CD4-positive, alpha-beta memory T cell (primary cell): ENCODE measurements at regions of chr2 and their contacts with region 1.

Region 1: DNA sequence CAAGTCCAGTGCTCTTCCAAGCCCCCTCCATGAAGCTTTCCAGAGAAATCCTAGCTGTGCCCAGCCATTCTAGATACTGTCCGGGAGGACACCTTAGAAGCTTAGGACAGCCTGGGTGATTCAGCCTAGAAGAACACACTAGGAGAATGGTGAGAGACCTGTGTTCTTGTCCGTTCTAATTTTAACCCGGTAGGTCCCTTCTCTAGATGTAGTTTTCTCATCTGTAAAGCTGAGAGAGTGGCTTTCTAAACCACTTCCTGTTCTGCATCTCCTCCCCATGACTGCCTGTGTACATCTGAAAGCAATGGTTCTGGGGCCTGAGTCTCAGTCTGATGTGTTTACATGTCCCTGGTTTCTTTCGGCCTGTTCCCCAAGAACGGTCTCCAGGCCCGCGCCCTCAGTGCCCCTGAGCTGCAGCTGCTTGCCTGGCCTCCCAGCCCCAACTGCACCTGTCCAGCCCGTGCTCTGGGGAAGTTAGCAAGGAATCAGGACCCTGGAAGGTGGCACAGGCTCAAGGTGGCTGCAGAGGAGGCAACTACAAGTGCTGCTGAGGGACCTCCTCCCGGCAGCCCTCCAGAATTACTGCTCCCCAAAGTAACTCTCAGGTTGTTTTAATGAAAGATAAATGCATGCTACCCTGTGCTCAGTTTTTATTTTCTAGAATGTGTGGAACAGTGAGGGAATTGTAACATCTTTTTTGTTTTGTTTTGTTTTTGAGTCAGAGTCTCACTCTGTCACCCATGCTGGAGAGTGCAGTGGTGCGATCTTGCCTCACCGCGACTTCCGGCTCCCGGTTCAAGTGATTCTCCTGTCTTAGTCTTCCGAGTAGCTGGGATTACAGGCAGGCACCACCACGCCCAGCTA is 105.9 kb downstream of the LBH start:
- DNase-seq: peak; percentile 58 to 66 (median 64)
- H3K4me3 ChIP-seq: peak overlapping the region; percentile 10 to 61
- H3K4me3 Mint-ChIP-seq: peak overlapping the region; percentile 76 to 89 (median 82)
- H3K27ac ChIP-seq: peak overlapping the region; percentile 58
- H3K27ac Mint-ChIP-seq: peak overlapping the region; percentile 94 to 97 (median 96)
- H3K4me1 ChIP-seq: peaks cover 72% of the 10 kb centered on the region
- H3K4me1 Mint-ChIP-seq: peaks cover 63 to 74% (median 70%) of the 10 kb centered on the region in 4 donors
- H3K27me3 ChIP-seq: no peaks in the 10 kb centered on the region
- H3K27me3 Mint-ChIP-seq: no peaks in the 10 kb centered on the region

Region 2: DNA sequence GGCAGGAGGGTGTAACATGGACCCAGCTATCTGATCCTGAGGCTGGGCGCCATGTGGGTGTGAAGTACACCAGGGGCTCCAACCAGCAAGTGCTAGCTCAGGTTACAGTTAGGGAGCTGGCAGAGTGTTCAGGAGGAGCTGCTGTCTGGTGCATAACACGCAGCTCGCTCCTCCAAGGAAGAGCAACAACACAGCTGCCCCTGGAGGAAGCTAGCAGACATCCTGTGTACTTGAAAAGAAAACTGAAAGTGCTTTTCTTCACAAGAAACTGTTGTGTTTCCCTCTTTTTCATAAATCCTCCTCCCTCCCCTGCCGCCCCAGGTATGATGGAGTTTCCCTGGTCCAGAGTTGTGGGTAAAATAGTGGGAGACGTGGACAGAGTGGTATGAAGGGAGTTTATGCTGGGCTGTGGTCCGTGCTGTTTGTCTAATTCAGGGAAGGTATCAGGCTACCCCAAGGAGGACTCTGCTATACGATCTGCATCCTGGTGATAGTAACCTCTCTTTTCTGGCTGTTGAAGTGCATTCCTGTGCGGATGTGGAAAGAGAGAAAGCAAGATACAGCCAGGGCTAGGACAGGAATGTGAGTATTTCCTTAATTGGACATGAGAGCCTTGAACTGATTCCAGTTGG is 112.0 kb before region 1 on chr2:
- CTCF ChIA-PET with region 1: interaction called, 68 read pairs
- POLR2A ChIA-PET with region 1: interaction called, 264 read pairs
- intact Hi-C with region 1: no loop called
- DNase-seq: peak; percentile 63 to 75 (median 67)
- H3K4me3 ChIP-seq: peak overlapping the region; percentile 54 to 79
- H3K4me3 Mint-ChIP-seq: peak overlapping the region; percentile 88 to 99 (median 94)
- H3K27ac ChIP-seq: peak overlapping the region; percentile 95
- H3K27ac Mint-ChIP-seq: peak overlapping the region; percentile 96 to 100 (median 99)
- H3K4me1 ChIP-seq: peaks cover 75% of the 10 kb centered on the region
- H3K4me1 Mint-ChIP-seq: peaks cover 55 to 84% (median 70%) of the 10 kb centered on the region in 4 donors
- H3K27me3 ChIP-seq: no peaks in the 10 kb centered on the region
- H3K27me3 Mint-ChIP-seq: no peaks in the 10 kb centered on the region

Region 3: DNA sequence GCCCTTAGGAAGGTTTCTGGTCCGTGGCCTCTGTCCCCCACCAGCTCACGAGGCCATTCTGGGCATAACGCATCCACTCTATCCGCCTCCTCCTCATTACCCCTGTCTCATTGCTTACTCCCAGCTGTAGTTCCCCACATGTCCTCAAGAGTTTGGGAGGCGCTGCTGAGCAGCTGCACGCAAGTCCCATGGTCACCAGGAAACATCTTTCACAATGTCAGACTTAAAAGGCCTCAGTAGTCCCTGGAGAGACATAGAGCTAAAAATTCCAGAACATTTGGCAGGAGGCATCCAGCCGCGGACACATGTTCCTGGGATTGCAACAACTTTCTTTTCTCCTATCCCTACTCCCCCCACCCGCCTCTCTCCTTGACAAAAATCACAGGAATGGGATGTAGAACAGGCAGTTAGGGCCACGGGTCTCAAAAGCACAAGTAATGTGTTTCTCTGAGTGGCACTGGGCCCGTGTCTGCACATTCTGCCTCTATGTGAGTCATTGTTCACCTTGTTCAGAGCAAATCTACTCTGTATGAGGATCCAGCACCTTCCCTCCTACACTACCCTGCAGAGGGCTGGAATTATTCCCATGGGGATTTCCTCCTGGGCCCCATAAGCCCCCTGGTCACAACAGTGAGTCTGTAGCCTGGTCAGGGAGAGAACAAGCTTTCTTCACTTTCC is 97.8 kb before region 1 on chr2:
- CTCF ChIA-PET with region 1: interaction called, 68 read pairs
- POLR2A ChIA-PET with region 1: interaction called, 264 read pairs
- intact Hi-C with region 1: no loop called
- DNase-seq: peak; percentile 76 to 80 (median 77)
- H3K4me3 ChIP-seq: peak overlapping the region in 1 of 2 donors; percentile 22
- H3K4me3 Mint-ChIP-seq: peak overlapping the region; percentile 76 to 99 (median 87)
- H3K27ac ChIP-seq: peak overlapping the region; percentile 6
- H3K27ac Mint-ChIP-seq: peak overlapping the region; percentile 71 to 90 (median 83)
- H3K4me1 ChIP-seq: peaks cover 90% of the 10 kb centered on the region
- H3K4me1 Mint-ChIP-seq: peaks cover 72 to 94% (median 82%) of the 10 kb centered on the region in 4 donors
- H3K27me3 ChIP-seq: no peaks in the 10 kb centered on the region
- H3K27me3 Mint-ChIP-seq: no peaks in the 10 kb centered on the region

Region 4: GRCh38 chr2:30266051-30266621 is 71.1 kb before region 1 on chr2:
- CTCF ChIA-PET with region 1: interaction called, 52 read pairs
- POLR2A ChIA-PET with region 1: interaction called, 101 read pairs
- intact Hi-C with region 1: loop called (anchors 2 kb)
- DNase-seq: peak; percentile 68 to 89 (median 75)
- H3K4me3 ChIP-seq: peak overlapping the region; percentile 34 to 44
- H3K4me3 Mint-ChIP-seq: peak overlapping the region; percentile 86 to 96 (median 90)
- H3K27ac ChIP-seq: peak overlapping the region; percentile 66
- H3K27ac Mint-ChIP-seq: peak overlapping the region; percentile 92 to 99 (median 98)
- H3K4me1 ChIP-seq: peaks cover 70% of the 10 kb centered on the region
- H3K4me1 Mint-ChIP-seq: peaks cover 46 to 84% (median 72%) of the 10 kb centered on the region in 4 donors
- H3K27me3 ChIP-seq: no peaks in the 10 kb centered on the region
- H3K27me3 Mint-ChIP-seq: no peaks in the 10 kb centered on the region

Region 5: DNA sequence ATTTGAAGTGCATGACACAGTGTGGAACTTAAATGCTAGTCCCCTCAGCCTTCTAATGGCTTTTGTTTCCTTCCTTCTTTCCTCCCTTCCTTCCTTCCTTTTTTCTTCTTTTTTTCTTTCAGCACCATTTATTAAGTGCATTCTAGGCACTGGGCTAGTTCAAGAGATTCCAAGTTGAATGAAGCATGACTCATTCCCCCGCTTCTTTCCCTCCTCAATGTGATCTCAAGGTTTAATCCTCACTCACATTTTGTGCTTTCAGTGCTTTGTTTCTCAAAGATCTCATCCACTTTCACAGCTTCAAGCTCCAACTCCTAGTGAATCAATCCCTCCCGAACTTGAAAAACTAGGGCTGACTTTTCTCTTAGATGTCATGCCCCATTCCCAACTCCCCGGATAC is 15.7 kb before region 1 on chr2:
- CTCF ChIA-PET with region 1: interaction called, 16 read pairs
- POLR2A ChIA-PET with region 1: interaction called, 26 read pairs
- intact Hi-C with region 1: no loop called
- DNase-seq: no peak
- H3K4me3 ChIP-seq: no peak overlapping the region
- H3K4me3 Mint-ChIP-seq: no peak overlapping the region
- H3K27ac ChIP-seq: no peak overlapping the region
- H3K27ac Mint-ChIP-seq: peak overlapping the region in 1 of 7 donors; percentile 49
- H3K4me1 ChIP-seq: peaks cover 4% of the 10 kb centered on the region
- H3K4me1 Mint-ChIP-seq: peaks cover 6 to 22% (median 16%) of the 10 kb centered on the region in 4 donors
- H3K27me3 ChIP-seq: no peaks in the 10 kb centered on the region
- H3K27me3 Mint-ChIP-seq: no peaks in the 10 kb centered on the region

Region 6: GRCh38 chr2:30447149-30448045 is 110.2 kb after region 1 on chr2 and contains the start of gene LCLAT1:
- CTCF ChIA-PET with region 1: interaction called, 8 read pairs
- POLR2A ChIA-PET with region 1: interaction called, 48 read pairs
- intact Hi-C with region 1: loop called (anchors 1 kb)
- DNase-seq: peak; percentile 87 to 88 (median 88)
- H3K4me3 ChIP-seq: peak within 1 kb of the TSS; percentile 48 to 96
- H3K4me3 Mint-ChIP-seq: peak within 1 kb of the TSS; percentile 95 to 99 (median 96)
- H3K27ac ChIP-seq: peak within 1 kb of the TSS; percentile 83
- H3K27ac Mint-ChIP-seq: peak within 1 kb of the TSS; percentile 89 to 99 (median 98)
- H3K4me1 ChIP-seq: peaks cover 27% of the 10 kb centered on the region
- H3K4me1 Mint-ChIP-seq: peaks cover 23 to 40% (median 30%) of the 10 kb centered on the region in 4 donors
- H3K27me3 ChIP-seq: no peaks in the 10 kb centered on the region
- H3K27me3 Mint-ChIP-seq: peaks cover 0 to 1% of the 10 kb centered on the region in 2 donors
- total RNA-seq, gene LCLAT1: 11.5 to 14.1 TPM

Region 7: DNA sequence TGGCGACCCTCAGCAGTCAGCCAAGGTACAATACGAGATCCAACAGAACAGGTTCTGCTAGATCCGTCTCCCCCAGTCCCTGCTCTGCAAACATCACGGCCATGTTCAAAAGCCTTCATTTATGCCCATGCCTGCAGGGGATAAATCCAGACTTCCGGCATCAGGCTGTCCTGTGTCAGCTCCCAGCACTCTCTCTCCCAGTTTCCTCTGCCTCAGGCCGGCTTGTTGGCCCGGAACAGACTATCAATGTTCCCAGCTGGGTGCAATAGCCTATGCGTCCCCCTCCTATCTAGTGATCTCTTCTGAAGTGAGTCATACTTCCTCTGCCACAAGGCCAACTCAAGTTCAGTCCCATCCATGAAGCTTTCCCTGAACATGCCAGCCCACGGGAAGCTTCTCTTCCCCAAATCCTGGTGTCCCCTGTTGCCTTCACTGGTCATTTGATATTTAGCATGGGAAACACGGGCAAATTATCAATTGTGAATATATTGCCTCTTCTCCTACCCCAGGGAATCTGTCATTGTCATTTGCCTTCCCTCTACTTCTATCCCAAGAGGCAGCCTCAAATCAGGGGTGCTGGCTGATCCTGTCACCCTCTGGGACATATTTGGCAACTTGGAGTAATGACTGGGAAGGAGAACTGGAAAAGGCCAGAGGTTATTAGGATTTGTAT is 419.0 kb after region 1 on chr2:
- CTCF ChIA-PET with region 1: no interaction called
- POLR2A ChIA-PET with region 1: no interaction called
- intact Hi-C with region 1: no loop called
- DNase-seq: no peak
- H3K4me3 ChIP-seq: no peak overlapping the region
- H3K4me3 Mint-ChIP-seq: no peak overlapping the region
- H3K27ac ChIP-seq: no peak overlapping the region
- H3K27ac Mint-ChIP-seq: no peak overlapping the region
- H3K4me1 ChIP-seq: no peaks in the 10 kb centered on the region
- H3K4me1 Mint-ChIP-seq: no peaks in the 10 kb centered on the region
- H3K27me3 ChIP-seq: no peaks in the 10 kb centered on the region
- H3K27me3 Mint-ChIP-seq: peaks cover 12 to 17% of the 10 kb centered on the region in 2 donors